Lower leg skin (tissue), 4 donors: ENCODE measurements at regions of chr7 and their contacts with region 1.

Region 1: GRCh38 chr7:43439631-43440401 is 143.1 kb upstream of the STK17A start:
- DNase-seq: no peak
- H3K4me3 ChIP-seq: no peak overlapping the region
- CTCF ChIP-seq: no peak
- POLR2A ChIP-seq: no peak

Region 2: DNA sequence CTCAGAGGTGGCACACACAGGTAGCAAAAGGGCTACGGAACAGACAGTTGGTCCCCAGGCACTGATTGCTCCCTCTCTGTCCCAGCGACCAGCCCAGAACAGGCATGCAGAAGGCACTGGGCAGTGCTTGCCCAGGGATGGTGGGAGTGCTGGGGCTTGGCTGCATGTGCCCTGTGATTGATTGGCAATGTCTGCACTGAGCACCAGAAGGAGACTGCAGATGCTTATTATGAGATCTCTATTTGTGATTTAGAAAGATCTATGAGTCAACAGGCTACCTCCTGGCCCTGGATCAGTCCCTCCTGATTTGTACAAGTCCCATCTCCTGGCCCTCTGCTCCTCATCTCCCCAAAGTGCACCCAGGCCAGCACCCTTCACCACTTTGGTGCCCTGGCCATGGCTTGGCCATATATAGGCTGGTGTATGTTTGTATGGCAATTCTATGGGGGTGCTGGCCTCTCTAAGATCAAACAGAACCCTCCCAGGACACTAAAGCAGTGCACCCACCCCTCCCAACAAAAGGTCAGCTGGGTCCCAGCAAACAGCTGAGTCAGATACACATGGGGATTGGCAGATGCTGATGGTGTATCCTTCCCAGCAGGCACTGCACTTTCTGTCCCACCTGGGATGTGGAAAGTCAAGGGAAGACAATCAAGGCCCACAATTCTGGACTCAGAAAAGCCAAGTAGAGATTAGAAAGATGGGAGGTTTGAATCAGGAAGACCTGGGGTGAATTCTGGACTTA is 854.7 kb after region 1 on chr7:
- intact Hi-C with region 1: loop called (anchors 5 kb)
- DNase-seq: peak; percentile 5 to 68
- H3K4me3 ChIP-seq: no peak overlapping the region
- CTCF ChIP-seq: no peak
- POLR2A ChIP-seq: no peak